Cardiac septum (tissue), 1 donor: ENCODE measurements at regions of chr20 and their contacts with region 1.

Region 1: DNA sequence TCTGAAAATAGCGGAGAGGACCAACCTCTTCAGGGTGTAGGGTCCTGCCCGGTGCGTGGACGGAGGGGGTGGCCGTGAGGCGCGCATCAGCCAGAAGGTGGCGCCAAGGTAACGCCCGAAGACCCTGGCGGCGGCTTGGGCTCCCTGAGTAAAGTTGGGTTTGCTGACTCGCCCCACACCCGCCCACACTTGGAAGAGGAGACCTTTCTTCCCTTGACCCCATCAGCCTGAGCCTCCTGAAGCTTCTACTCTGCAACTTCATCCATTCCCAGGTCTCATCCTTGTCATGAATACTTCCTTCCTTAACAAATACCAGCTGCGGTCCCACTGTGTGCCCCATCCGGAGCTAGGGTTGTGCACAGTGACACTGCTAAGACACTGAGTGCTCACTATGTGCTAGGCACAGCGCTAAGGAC is 14.6 kb downstream of the CD40 start:
- DNase-seq: peak; percentile 79

Region 2: DNA sequence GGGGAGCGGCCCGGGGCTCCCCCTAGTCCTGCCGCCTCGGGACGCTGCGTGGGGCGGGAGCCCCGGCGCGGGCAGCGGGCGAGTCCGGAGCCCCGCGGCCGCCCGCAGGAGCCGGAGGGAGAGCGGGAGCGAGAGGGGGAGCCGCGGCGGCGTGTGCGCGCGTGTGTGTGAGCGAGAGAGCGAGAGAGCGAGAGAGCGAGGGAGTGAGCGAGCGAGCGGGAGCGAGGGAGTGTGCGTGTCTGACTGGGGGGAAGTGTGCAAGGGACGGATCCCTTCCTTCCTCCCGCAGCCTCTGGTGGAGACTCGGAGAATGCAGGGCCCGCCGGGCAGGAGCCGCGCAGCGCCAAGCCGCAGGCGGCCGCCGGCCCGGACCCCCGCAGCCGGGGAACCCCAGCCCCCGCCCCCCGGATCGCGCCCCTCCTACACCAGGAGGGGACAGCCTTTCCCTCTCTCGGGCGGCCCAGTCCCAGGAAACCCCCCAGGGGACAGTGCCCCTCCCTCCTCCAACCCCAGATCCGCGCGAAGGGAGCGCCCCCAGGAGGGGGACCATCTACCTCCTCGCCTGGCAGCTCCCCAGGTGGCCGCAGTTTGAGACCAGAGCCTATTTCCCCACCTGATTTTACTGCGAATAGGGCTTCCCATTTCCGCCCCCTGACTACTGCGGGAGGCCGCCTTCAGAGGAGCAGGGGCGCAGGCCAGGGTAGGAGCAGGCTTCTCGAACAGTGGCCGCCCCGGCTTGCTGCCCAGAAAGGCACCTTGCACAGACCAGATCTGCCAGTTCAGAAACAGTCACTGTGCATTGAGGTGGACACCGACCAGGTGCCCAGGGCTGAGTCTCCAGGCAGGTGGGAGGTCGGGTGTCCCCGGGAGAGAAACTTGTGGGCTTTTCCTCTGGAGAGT is 175.8 kb after region 1 on chr20 and contains the start of gene CDH22:
- intact Hi-C with region 1: loop called (anchors 2 kb)
- DNase-seq: no peak
- total RNA-seq, gene CDH22: 0.83 TPM

Region 3: DNA sequence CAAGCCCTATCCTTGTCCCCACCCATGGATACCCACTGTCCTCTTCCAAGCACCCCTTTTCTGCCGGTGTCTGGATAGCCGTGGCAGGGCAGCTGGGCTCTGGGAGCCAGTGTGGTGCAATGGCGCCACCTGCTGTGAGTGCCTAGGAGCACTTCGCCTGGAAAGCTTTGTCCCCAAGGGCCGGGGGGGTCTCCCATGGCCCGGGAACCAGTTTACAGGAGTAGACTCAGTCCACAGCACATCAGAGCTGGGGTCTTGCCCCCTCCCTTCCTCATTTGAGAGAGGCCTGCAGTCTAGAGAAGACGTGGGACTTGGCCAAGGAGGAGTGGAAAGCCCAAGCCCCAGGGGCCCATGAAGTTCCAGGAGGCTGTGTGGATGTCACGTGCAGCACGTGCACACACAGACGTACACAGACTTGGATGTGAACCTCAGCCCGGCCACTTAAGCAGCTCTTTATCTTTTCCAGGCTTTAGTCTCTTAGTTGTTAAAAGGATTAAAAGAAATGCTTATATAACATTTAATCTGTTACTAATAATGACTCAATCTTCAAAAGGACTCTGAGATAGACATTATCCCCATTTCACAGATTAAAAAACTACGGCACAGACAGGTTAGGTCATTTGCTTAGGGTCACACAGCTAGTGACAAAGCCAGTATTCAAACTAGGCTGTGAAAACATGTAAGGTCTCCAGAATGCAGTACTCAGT is 216.5 kb after region 1 on chr20:
- intact Hi-C with region 1: loop called (anchors 2 kb)
- DNase-seq: no peak